ENCODE measurements at regions of chr15 and their contacts with region 1.

Region 1: DNA sequence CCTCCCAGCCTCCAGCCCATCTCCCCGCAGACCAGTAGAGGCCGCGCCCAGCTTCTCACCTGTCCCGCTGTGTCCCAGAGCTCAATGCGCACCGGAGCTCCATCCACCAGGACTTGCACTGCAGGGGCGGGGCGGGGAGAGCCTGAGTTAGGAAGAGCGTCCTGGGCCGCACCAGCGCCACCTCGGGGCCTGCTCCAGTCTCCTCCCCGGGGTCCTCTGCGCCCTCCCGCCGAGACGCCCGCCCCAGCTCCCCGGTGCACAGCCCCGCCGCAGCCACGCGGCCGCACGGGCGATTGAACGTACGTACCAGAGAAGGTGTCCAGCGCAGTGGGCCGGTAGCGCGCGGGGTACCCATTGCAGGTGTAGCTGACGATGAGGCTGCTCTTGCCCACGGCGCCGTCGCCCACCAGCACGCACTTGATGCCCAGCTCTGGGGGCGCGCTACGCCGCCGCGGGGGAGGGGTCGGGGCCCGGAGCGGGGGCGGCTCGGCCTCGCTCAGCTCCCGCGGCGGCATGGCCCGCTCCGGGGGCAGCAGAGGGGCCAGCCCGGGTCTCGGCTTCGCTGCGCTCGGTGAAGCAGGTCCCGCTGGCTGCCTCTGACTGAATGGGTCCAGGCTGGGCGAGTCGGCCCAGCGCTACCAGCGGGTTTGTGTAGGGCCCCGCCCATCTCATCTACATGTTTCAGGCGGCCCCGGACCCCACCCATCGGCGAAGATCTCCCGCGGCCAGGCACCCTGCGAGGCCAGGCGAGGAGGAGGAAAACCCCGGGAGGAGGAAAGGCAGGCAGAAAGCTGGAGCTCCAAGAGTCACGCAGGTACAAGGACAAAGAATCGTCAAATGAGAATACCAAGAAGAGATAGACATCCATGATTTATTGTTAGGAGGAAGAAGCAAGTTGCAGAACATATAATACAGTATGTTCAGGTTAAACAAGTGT is at the start of gene RHOV:
- DNase-seq: peak; percentile 58
- H3K4me3 Mint-ChIP-seq: peak within 1 kb of the TSS; percentile 88
- H3K27ac Mint-ChIP-seq: peak within 1 kb of the TSS; percentile 68
- H3K4me1 Mint-ChIP-seq: peaks cover 34% of the 10 kb centered on the region
- H3K27me3 Mint-ChIP-seq: peaks cover 7% of the 10 kb centered on the region
- total RNA-seq, gene RHOV: 1.3 and 1.6 TPM in 2 replicates

Region 2: GRCh38 chr15:40857601-40858341 is 16.1 kb before region 1 on chr15:
- intact Hi-C with region 1: loop called (anchors 1 kb)
- DNase-seq: peak; percentile 77
- H3K4me3 Mint-ChIP-seq: no peak overlapping the region
- H3K27ac Mint-ChIP-seq: no peak overlapping the region
- H3K4me1 Mint-ChIP-seq: peaks cover 18% of the 10 kb centered on the region
- H3K27me3 Mint-ChIP-seq: no peaks in the 10 kb centered on the region

Region 3: DNA sequence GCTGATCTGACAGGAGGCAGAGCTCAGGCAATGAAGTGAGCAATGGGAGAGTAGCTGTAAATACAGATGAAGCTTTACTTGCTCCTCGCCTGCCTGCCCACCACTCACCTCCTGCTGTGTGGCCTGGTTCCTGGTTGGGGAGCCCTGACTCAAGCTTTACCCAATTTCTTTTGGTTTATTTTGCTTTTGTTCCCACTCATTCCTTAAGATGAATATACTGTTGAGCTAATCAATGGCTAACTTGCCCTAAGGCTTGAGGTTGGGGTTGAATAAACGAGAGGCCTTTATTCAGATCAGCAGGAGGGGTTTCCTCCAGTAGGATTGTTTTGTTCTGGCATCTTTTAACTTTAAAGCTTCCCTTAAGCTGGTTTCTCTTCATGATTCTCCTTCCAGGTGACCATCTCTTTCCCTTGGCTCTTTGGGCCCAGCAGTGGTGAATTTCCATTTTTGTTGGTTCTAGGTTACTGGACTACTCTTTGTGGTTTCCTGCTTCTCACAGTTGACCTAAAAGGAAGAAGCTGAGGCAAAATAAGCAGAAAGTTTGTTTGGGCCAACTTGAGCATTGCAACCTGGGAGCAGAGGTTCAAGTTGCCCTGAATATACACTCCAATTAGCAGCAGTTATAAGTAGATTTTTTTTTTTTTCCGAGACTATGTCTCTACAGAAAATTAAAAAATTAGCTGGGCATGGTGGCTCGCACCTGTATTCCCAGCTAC is 1745.9 kb after region 1 on chr15:
- intact Hi-C with region 1: no loop called
- DNase-seq: no peak
- H3K4me3 Mint-ChIP-seq: no peak overlapping the region
- H3K27ac Mint-ChIP-seq: no peak overlapping the region
- H3K4me1 Mint-ChIP-seq: peaks cover 8% of the 10 kb centered on the region
- H3K27me3 Mint-ChIP-seq: no peaks in the 10 kb centered on the region

Measured in activated T-helper 1 cell treated with anti-CD3 and anti-CD28 coated beads, Interleukin-12 subunit alpha, Interleukin-12 subunit beta, Interleukin-2, Interleukin-4 antibody, amounts not matched to agents 30 ng/mL and 10 ng/mL and 1 ng/mL, durations not matched to agents 14 hours and 24 hours and 36 hours (primary cell).